ENCODE measurements at regions of chr3 and their contacts with region 1.

Region 1: DNA sequence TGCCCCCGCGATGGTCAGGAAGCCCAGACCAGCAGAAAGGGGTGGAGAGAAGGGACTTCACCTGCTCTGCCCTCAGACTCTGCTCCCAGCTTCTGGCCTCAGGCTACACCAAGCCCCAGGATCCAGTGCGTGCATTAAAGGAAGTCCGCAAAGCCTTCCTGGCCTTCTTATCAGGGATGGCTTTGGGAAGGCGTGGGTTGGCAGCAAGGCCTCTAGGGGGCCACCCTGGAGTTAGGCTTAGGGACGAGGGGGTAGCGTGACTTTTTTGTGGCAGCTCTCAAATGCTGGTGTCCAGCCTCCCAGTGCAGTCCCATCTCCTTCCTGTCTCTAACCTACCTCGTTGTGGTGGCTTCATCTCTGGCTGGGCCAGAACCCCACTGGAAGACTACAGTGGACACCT is 18.9 kb upstream of the RPL29 start:
- DNase-seq: no peak
- ATAC-seq: peak; percentile 57
- H3K4me3 ChIP-seq: no peak overlapping the region
- H3K27ac ChIP-seq: no peak overlapping the region
- H3K4me1 ChIP-seq: no peaks in the 10 kb centered on the region
- H3K27me3 ChIP-seq: no peaks in the 10 kb centered on the region
- CTCF ChIP-seq: peak; percentile 34; the same call in 1 of the 2 replicates
- POLR2A ChIP-seq: no peak
- RAD21 ChIP-seq: peak; percentile 39

Region 2: DNA sequence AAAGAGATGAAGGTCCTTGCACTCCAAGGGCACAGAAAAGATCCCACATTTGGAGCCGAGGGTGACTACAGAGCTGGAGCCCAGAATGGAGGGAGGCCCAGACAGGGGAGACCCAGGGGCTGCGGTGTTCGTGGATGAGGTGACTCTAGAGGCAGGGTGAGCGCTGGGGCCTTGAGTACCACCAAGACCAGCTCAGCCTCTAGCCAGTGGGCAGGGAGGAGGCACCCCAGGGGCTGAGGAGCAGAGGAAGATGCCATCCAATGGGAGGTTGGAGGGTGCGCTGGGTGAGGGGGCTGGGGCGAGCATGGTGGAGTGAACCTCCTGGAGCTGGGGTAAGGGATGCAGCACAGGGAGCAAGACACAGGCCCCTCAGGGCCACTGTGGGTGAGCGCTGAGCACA is 86.2 kb before region 1 on chr3:
- CTCF ChIA-PET with region 1: no interaction called
- POLR2A ChIA-PET with region 1: no interaction called
- dilution Hi-C with region 1: no loop called
- in situ Hi-C with region 1: no loop called
- intact Hi-C with region 1: no loop called
- DNase-seq: no peak
- ATAC-seq: no peak
- H3K4me3 ChIP-seq: no peak overlapping the region
- H3K27ac ChIP-seq: no peak overlapping the region
- H3K4me1 ChIP-seq: no peaks in the 10 kb centered on the region
- H3K27me3 ChIP-seq: no peaks in the 10 kb centered on the region
- CTCF ChIP-seq: no peak
- POLR2A ChIP-seq: no peak
- RAD21 ChIP-seq: no peak

Region 3: GRCh38 chr3:52046186-52046913 is 31.7 kb after region 1 on chr3:
- CTCF ChIA-PET with region 1: no interaction called
- POLR2A ChIA-PET with region 1: no interaction called
- dilution Hi-C with region 1: no loop called
- in situ Hi-C with region 1: loop called (anchors 5 kb)
- intact Hi-C with region 1: no loop called
- DNase-seq: peak; percentile 98
- ATAC-seq: peak; percentile 91
- H3K4me3 ChIP-seq: no peak overlapping the region
- H3K27ac ChIP-seq: peak overlapping the region; percentile 89
- H3K4me1 ChIP-seq: peaks cover 36% of the 10 kb centered on the region
- H3K27me3 ChIP-seq: no peaks in the 10 kb centered on the region
- CTCF ChIP-seq: no peak
- POLR2A ChIP-seq: no peak
- RAD21 ChIP-seq: no peak; the same call in 1 of the 2 replicates

Region 4: GRCh38 chr3:52339612-52340011 is 325.0 kb after region 1 on chr3:
- CTCF ChIA-PET with region 1: no interaction called
- POLR2A ChIA-PET with region 1: no interaction called
- dilution Hi-C with region 1: no loop called
- in situ Hi-C with region 1: no loop called
- intact Hi-C with region 1: no loop called
- DNase-seq: peak; percentile 87
- ATAC-seq: peak; percentile 73
- H3K4me3 ChIP-seq: no peak overlapping the region
- H3K27ac ChIP-seq: no peak overlapping the region
- H3K4me1 ChIP-seq: peaks cover 4% of the 10 kb centered on the region; the same call in 1 of the 2 replicates
- H3K27me3 ChIP-seq: no peaks in the 10 kb centered on the region
- CTCF ChIP-seq: peak; percentile 80
- POLR2A ChIP-seq: no peak
- RAD21 ChIP-seq: peak; percentile 85

Measured in IMR-90 (cell line).